ENCODE measurements at regions of chr20 and their contacts with region 1.

Region 1: GRCh38 chr20:16729565-16730456 is at the start of gene SNRPB2:
- DNase-seq: peak; percentile 81 to 96 (median 91)
- ATAC-seq: peak; percentile 95
- H3K4me3 ChIP-seq: peak within 1 kb of the TSS; percentile 84 to 97
- H3K4me3 Mint-ChIP-seq: peak within 1 kb of the TSS; percentile 100
- H3K27ac ChIP-seq: peak within 1 kb of the TSS; percentile 93 to 94
- H3K27ac Mint-ChIP-seq: peak within 1 kb of the TSS; percentile 100
- H3K4me1 ChIP-seq: peaks cover 36% of the 10 kb centered on the region
- H3K4me1 Mint-ChIP-seq: peaks cover 52% of the 10 kb centered on the region
- H3K27me3 ChIP-seq: peaks cover 0 to 12% of the 10 kb centered on the region in 2 experiments
- H3K27me3 Mint-ChIP-seq: peaks cover 15% of the 10 kb centered on the region
- CTCF ChIP-seq: no peak
- total RNA-seq, gene SNRPB2: 49.0 to 50.4 TPM

Region 2: DNA sequence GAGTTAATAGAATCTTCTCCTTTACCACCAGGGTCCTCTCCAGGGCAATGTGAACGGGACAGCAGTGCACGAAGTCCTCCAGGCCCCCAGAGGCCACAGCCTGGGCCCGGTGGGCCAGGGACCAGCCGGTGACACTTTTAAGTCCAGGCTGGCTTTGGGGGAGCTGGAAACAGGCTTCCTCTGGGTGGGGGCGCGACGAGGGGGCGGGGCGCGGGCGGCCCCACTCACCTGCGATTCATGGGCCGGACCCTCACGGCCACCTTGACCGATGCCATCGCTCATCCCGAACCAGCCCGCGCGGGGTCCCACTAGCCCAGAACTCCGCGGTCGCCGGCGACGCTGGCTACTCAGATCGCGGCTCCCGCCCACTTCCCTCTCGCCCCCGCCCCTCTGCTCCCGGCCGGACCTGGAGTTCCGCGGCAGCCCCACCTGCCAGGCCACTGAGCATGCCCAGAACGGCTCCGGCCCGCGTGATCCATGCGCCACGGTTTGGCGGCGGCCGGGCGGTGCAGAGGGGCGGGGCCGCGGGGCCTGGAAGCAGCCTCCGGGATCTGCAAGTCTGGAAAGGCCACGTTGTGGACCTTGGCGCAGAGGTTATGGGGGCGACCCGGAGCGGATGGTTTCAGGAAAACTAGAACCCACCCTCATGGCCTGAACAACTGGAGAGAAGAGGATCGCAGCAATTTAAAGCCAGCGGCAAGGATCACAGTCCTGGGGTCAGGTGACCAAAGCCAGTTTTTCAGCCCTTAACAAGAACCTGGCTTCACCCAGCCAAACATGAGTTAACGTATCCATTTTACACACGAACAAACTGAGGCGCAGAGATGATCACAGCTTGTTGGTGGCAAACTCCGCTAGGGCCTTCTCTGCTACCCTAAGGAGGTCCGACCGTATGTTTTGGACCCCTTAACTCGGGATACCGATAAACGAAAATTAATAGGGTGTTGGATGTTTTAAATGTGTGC is 156.5 kb before region 1 on chr20 and contains the start of gene KIF16B:
- CTCF ChIA-PET with region 1: no interaction called
- POLR2A ChIA-PET with region 1: no interaction called
- intact Hi-C with region 1: loop called (anchors 1 to 2 kb)
- DNase-seq: peak; percentile 35 to 88 (median 79)
- ATAC-seq: peak; percentile 79
- H3K4me3 ChIP-seq: peak within 1 kb of the TSS; percentile 60 to 88
- H3K4me3 Mint-ChIP-seq: peak within 1 kb of the TSS; percentile 88
- H3K27ac ChIP-seq: peak within 1 kb of the TSS; percentile 26 to 33
- H3K27ac Mint-ChIP-seq: peak within 1 kb of the TSS; percentile 53
- H3K4me1 ChIP-seq: peaks cover 19% of the 10 kb centered on the region
- H3K4me1 Mint-ChIP-seq: peaks cover 43% of the 10 kb centered on the region
- H3K27me3 ChIP-seq: no peaks in the 10 kb centered on the region
- H3K27me3 Mint-ChIP-seq: peaks cover 4% of the 10 kb centered on the region
- CTCF ChIP-seq: no peak
- total RNA-seq, gene KIF16B: 4.7 to 4.9 TPM

Region 3: GRCh38 chr20:16709017-16709416 is 20.8 kb before region 1 on chr20:
- CTCF ChIA-PET with region 1: no interaction called
- POLR2A ChIA-PET with region 1: interaction called, 4 read pairs
- intact Hi-C with region 1: loop called (anchors 2 kb)
- DNase-seq: peak in 3 of 9 experiments; percentile 20 to 63 (median 42)
- ATAC-seq: peak; percentile 73
- H3K4me3 ChIP-seq: no peak overlapping the region
- H3K4me3 Mint-ChIP-seq: peak overlapping the region; percentile 35
- H3K27ac ChIP-seq: no peak overlapping the region
- H3K27ac Mint-ChIP-seq: no peak overlapping the region
- H3K4me1 ChIP-seq: peaks cover 25% of the 10 kb centered on the region
- H3K4me1 Mint-ChIP-seq: peaks cover 30% of the 10 kb centered on the region
- H3K27me3 ChIP-seq: no peaks in the 10 kb centered on the region
- H3K27me3 Mint-ChIP-seq: peaks cover 25% of the 10 kb centered on the region
- CTCF ChIP-seq: no peak

Measured in CD8-positive, alpha-beta T cell (primary cell).